Cardiac septum (tissue), 1 donor: ENCODE measurements at regions of chr9 and their contacts with region 1.

Region 1: GRCh38 chr9:97598461-97599288 is 34.5 kb downstream of the TSTD2 start:
- DNase-seq: peak; percentile 83

Region 2: DNA sequence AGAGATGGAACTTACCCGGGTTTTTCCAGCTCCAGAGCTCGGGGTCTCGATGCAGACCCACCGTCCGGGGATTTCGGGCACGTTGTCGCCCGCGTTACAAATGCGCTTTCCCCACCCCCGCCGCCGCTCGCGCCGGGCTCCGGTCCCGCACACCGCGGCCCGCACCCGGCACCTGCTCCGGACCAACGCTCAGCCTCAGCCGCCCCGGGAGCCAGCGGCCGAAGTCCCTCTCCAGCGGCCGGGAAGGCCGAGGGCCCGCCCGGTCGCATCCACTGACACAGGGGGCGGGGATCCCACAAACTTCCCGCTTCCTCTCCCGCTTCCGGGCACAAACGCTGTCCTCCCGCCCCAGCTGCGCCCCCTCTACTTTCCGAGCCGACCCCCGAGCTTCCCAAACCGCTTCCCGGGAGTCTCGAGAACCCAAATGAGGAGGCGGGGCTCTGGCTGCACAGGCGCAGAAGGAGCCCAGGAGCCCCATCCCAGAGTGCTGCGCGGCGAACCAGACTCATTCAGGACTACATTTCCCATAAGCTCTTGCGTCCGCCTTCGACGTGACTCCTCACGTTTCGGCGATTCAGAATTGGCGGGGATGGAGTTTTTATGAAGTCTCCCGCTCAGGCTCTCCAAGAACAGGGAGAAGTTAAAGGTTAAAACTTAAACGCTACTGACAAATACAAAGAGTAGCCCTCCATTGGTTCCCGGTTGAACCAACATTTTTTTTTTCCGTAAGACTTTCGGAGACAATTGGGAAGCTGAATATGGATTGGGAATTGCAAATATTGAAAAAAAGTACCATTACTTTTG is 744.4 kb before region 1 on chr9 and contains the start of gene ZNF782:
- intact Hi-C with region 1: loop called (anchors 10 kb)
- DNase-seq: peak; percentile 97
- total RNA-seq, gene ZNF782: 3.0 TPM

Region 3: GRCh38 chr9:97136421-97136820 is 462.3 kb before region 1 on chr9:
- intact Hi-C with region 1: no loop called
- DNase-seq: no peak

Region 4: DNA sequence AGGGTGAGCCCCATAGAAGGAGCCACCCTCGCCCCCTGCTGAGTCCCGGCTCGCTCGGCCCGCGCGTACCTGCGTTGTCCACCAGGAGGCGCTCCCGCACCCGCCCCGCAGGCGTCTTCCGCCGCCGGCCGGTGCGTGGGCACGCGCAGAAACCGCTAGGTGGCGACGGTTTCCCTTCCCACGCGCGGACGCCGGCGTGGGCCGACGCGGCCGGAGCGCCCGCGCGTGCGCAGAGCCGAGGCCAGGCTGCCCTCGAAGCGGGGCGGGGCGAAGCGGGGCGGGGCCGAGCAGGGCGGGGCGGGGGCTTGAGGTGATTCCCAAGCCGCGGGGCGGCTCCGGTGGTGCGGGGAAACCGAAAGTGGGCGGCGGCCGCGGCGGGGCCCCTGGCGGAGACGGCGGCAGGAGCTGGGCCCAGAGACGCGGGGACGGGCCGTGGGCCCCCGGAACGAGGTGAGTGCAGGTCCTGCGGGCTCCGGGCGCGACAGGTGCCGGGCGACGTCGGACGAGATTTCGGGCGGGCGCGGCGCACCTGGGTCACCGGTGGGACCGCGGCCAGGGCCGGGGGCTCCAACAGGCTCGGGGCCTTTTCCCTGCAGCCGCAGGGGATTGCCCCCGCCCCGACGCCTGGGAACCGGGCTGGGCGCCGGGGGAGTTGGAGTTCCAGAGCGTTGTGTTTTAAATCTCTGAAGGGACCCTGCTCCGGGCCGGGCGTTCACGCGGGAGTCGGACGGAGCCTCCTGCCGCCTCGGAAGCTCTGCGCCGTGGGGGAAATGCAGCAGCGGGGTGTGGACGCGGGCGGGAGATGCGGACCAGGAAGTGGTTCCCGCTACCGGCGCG is 186.7 kb before region 1 on chr9 and contains the start of gene TDRD7:
- intact Hi-C with region 1: loop called (anchors 5 kb)
- DNase-seq: peak; percentile 96
- total RNA-seq, gene TDRD7: 8.8 TPM

Region 5: DNA sequence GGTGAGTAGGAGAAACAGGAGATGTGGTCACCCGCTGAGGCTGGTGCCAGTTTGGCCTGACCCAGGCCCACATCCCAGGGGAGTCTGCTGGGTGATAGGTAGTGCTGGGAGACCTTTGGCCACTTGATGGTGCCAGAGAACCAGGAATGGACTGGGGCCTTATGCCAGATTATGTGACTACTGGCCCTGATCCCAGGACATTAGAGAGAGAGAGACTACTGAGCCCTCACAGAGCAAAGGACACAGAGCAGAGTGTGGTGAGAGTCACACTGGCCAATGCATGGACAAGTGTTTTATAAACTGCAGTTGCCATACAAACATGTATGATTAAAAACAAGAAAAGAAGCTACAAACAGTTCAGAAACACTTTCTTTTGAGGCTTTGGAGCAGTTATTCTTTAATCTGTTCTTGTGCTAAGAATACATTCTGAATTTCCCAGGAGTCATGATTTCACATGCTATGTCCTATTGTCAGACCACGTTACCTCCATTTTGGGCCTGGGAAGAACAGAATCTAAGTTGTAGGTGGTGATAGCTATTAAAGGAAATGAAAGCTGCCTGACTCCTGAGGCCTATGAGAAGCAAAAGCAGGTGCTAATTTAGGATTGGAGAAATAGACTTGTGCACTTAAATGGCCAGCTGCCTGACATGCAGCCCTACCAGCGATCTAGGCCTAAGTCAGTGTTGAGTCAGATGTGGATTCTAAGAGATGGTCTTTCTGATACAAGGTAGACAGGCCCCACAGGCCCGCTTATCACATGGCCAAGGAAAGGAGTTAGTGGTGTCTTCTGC is 129.8 kb before region 1 on chr9:
- intact Hi-C with region 1: loop called (anchors 1 kb)
- DNase-seq: peak; percentile 80

Region 6: GRCh38 chr9:97559111-97559514 is 39.6 kb before region 1 on chr9:
- intact Hi-C with region 1: loop called (anchors 5 kb)
- DNase-seq: no peak